Ovary (tissue), 10 donors: ENCODE measurements at regions of chr18 and their contacts with region 1.

Region 1: DNA sequence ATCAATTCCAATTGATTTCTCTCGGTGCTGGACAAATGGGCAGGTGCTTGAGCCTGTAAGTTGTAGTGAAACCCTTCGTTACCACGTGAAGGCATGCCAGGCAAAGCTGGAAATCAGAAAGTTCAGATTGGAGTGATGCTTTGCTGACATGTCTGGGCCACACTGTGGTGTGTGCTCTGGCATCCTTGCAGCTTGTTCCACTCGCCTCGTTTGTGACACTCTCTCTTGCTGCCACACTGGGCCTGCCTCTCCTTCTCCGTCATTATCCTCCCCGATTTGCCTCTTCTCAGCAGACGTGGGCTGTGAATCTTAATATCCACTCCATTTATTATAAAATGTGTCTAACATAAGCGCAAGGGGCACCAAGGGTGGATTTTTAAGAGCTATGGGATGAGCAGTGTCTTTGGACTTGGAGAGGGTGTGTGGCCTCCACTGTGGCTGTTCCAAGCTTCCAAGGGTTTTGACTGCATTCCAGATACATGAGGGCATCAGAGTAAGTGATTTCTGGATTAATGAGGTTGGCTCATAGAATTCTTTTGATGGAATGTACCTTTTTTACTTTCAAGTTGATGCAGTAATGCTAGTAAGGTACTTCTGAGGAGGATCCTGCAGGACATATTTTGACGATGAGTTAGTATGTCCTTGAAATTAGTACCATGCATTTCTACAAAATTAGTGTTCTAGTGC is 238.8 kb downstream of the TPGS2 start:
- DNase-seq: no peak
- H3K4me3 ChIP-seq: no peak overlapping the region
- H3K27ac ChIP-seq: no peak overlapping the region
- H3K4me1 ChIP-seq: peaks cover 3% of the 10 kb centered on the region
- H3K27me3 ChIP-seq: no peaks in the 10 kb centered on the region
- CTCF ChIP-seq: no peak
- EP300 ChIP-seq: no peak
- POLR2A ChIP-seq: no peak

Region 2: GRCh38 chr18:36650906-36651305 is 60.9 kb after region 1 on chr18:
- intact Hi-C with region 1: no loop called
- DNase-seq: no peak
- H3K4me3 ChIP-seq: no peak overlapping the region
- H3K27ac ChIP-seq: no peak overlapping the region
- H3K4me1 ChIP-seq: no peaks in the 10 kb centered on the region
- H3K27me3 ChIP-seq: no peaks in the 10 kb centered on the region
- CTCF ChIP-seq: no peak
- EP300 ChIP-seq: no peak
- POLR2A ChIP-seq: no peak

Region 3: DNA sequence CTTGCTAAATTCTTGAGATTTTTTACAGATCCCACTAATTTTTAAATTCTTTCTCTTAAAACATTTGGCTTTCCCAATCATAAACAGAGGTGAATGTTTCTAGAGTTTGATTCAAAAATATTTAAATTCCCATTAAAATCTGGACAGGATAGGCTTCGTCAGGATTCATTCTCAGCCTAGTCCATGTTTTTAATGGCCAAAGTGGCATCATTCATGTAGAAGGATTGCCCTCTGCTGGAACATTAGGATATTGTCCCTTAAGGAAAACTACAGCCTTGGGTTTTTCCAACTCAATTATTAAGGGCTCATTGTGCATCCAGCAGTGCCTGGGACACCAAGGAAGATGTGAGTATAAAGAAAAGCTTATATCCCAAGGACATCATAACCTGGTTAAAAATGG is 167.1 kb after region 1 on chr18:
- intact Hi-C with region 1: loop called in 1 of 4 experiments (anchors 10 kb)
- DNase-seq: no peak
- H3K4me3 ChIP-seq: no peak overlapping the region
- H3K27ac ChIP-seq: no peak overlapping the region
- H3K4me1 ChIP-seq: peaks cover 3% of the 10 kb centered on the region
- H3K27me3 ChIP-seq: no peaks in the 10 kb centered on the region
- CTCF ChIP-seq: peak in 2 of 3 donors; percentile 69 to 72
- EP300 ChIP-seq: no peak
- POLR2A ChIP-seq: no peak

Region 4: DNA sequence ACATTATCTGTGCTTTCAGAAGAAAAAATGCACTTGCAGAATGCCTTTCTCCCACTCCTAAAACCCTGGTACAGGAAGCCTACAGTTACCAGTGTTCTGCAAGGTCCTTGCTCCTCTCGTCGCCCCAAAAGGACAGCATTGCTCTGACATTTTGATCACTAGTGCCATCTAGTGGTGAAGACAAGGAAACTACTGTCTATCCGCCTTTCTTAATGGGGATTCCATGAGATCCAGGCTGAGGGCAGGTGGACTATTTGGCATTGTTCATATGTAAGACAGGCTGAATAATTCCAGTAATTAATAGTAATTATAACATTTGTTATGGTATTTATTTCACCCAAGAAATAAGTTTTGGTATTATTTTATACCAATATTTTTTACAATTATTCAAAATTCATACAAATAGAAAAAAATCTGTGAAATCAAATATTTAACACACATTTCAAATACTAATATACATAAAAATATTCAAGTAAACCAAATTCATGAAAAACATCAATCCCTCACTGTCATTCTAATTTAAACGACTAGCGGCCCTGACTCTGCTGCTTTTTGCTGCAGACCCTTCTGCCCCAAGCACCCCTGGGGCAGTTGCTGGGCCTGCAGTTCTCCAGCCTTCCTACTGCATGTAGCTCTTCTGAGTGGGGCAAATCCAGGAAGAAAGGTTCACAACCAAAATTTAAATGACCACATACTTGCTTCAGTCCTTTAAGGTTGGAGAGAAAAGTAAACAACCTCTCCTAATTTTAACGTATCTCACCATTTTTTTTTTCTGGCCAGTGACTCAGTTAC is 219.8 kb after region 1 on chr18:
- intact Hi-C with region 1: no loop called
- DNase-seq: peak in 3 of 5 donors; percentile 11 to 30 (median 26)
- H3K4me3 ChIP-seq: no peak overlapping the region
- H3K27ac ChIP-seq: no peak overlapping the region
- H3K4me1 ChIP-seq: peaks cover 6% of the 10 kb centered on the region
- H3K27me3 ChIP-seq: no peaks in the 10 kb centered on the region
- CTCF ChIP-seq: peak; percentile 47 to 59 (median 54)
- EP300 ChIP-seq: no peak
- POLR2A ChIP-seq: no peak

Region 5: GRCh38 chr18:37956902-37957301 is 1366.9 kb after region 1 on chr18:
- intact Hi-C with region 1: loop called in 1 of 4 experiments (anchors 5 kb)
- DNase-seq: no peak
- H3K4me3 ChIP-seq: no peak overlapping the region
- H3K27ac ChIP-seq: no peak overlapping the region
- H3K4me1 ChIP-seq: no peaks in the 10 kb centered on the region
- H3K27me3 ChIP-seq: no peaks in the 10 kb centered on the region
- CTCF ChIP-seq: no peak
- EP300 ChIP-seq: no peak
- POLR2A ChIP-seq: no peak